Ascending aorta (tissue), 2 donors: ENCODE measurements at regions of chr10 and their contacts with region 1.

Region 1: DNA sequence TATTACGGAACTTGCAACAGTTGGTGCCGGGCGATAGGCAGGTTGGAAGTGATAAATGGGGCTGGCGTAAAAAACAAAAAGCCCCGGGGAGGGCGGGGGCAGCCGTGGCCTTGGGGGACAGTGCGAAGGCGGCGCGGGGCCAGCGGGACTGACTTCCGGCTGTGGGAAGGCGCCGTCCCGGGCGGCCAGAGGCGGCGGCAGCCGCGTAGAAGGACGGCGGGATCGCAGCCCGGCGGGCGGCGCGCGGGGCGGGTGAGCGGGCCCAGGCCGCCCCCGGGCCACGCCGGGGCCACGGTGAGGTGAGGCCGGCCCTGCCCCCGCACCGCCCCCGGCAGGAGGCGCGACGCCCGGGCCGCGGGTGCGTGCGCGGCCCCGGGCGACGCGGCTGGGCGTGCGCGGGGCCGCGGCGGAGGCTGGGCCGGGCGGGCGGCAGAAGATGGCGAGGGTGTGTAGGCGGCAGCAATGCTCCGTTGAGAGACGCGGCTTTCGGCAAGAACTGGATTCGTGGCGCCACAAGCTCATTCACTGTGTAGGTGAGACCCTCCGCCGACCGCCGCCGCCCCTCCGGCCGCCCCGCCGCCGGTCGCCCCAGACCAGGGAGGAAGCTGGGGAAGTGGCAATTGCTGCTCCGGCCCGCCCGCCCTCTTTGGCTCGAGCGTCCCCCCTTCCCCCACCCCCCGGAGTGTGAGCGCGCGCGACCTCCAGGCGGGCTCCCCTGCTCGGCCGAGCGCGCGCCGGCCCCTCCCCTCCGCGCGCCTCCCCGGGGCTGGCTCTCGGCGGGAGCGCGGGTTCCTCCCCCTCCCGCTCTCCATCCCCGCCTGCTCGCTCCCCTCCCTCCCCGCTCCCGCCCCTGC is at the start of gene LCOR:
- DNase-seq: peak; percentile 25 to 92
- H3K4me3 ChIP-seq: peak within 1 kb of the TSS; percentile 71 to 92
- H3K27ac ChIP-seq: peak within 1 kb of the TSS; percentile 92 to 98
- H3K4me1 ChIP-seq: peaks cover 0 to 19% of the 10 kb centered on the region in 2 donors
- H3K27me3 ChIP-seq: no peaks in the 10 kb centered on the region
- CTCF ChIP-seq: peak in 2 of 3 experiments; percentile 3 to 25
- total RNA-seq, gene LCOR: 7.5 TPM

Region 2: DNA sequence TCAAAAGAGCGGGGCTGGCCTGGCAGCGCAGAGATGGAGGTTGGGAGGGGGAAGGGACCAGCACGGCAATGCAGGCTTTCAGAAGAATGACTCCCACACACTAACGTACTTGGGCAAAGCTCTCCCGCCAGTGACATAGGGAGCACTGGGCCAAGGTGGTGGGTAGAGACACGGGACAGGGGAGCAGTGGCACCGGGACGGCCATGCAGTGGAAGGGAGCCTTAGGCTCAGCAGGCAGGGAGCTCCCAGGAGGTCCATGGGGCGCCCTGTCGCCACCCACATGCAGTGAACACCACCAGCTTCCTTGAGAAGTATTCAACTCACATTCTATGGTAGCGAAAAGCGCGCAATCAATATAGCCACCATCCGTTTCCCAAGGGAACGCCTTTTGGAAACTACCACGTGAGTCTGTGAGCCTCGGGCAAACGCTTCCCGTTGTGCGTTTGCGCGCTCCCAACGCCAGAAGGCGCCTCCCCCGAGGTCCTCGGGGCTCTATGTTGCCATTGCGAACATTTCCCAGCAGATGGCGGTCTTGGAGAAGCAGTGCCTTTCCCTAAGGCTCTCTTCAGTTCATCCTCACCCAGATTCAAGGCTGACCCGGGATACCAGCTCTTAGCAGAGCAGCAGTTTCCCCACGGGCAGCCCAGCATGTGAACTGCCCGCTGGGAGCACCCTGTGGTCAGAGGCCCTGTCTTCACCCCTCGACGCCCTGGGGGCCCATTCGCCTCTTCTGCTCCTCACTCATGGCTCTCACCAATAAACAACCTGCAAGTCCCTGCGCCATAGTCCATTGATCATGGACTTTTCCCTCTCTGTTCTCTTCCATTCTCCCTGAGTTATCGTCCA is 456.9 kb before region 1 on chr10:
- intact Hi-C with region 1: loop called (anchors 5 kb)
- DNase-seq: peak; percentile 33 to 92
- H3K4me3 ChIP-seq: peak overlapping the region; percentile 45 to 61
- H3K27ac ChIP-seq: no peak overlapping the region
- H3K4me1 ChIP-seq: peaks cover 0 to 4% of the 10 kb centered on the region in 2 donors
- H3K27me3 ChIP-seq: no peaks in the 10 kb centered on the region
- CTCF ChIP-seq: peak; percentile 89 to 99 (median 99)

Region 3: DNA sequence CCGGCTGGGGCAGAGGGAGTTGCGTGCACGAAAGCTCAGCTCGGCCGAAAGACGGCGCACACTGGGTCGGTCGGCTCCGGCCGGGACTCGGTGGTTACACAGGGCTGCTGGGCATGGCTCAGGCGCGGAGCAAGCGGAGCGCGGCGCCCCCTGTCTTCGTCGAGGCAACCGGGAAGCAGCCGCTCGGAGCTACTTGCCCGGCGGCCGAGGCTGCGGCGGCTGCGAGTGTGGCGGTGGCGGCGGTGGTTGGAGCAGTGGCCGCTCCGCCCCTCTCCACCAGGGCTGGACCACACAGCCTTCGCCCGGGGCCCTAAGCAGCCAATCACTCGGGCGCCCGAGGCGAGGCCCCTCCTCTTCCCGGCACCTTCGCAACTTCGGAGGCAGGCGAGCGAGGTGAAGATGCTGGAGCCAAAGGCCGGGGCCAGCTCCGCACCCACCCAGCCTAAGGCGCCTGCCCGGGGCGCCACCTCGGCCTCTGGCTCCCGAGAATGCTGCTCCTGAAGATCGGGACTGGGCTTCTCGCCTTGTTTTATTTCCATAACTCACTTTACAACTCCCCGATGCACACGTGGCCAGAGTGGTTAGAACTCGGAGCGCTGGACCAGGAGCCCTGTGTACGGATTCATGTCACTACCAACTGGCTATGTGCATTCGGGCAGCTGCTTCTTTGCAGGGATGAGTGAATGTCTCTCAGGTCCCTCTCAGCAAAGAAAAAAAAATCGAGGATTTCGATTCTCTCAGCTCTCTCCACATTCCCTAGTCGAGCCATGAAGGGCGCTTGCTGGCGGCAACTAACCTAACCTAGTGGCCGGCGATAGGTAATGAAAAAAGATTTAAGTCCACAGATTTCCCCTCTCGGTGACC is 318.2 kb before region 1 on chr10 and contains the start of gene TLL2:
- intact Hi-C with region 1: loop called (anchors 5 kb)
- DNase-seq: peak; percentile 46 to 90
- H3K4me3 ChIP-seq: peak within 1 kb of the TSS; percentile 32 to 83
- H3K27ac ChIP-seq: peak within 1 kb of the TSS in 1 of 2 donors; percentile 39
- H3K4me1 ChIP-seq: peaks cover 6 to 9% of the 10 kb centered on the region in 2 donors
- H3K27me3 ChIP-seq: no peaks in the 10 kb centered on the region
- CTCF ChIP-seq: peak; percentile 54 to 79 (median 56)
- total RNA-seq, gene TLL2: not detected

Region 4: GRCh38 chr10:96765406-96766240 is 66.5 kb before region 1 on chr10:
- intact Hi-C with region 1: loop called (anchors 2 kb)
- DNase-seq: peak in 1 of 2 donors; percentile 79
- H3K4me3 ChIP-seq: no peak overlapping the region
- H3K27ac ChIP-seq: no peak overlapping the region
- H3K4me1 ChIP-seq: no peaks in the 10 kb centered on the region
- H3K27me3 ChIP-seq: no peaks in the 10 kb centered on the region
- CTCF ChIP-seq: peak; percentile 51 to 61 (median 58)

Region 5: GRCh38 chr10:97025613-97026242 is 193.6 kb after region 1 on chr10:
- intact Hi-C with region 1: loop called (anchors 2 kb)
- DNase-seq: peak in 1 of 2 donors; percentile 75
- H3K4me3 ChIP-seq: no peak overlapping the region
- H3K27ac ChIP-seq: peak overlapping the region; percentile 83 to 92
- H3K4me1 ChIP-seq: peaks cover 7 to 24% of the 10 kb centered on the region in 2 donors
- H3K27me3 ChIP-seq: no peaks in the 10 kb centered on the region
- CTCF ChIP-seq: peak; percentile 46 to 65 (median 54)